PC-9 (cell line): ENCODE measurements at regions of chr6 and their contacts with region 1.

Region 1: DNA sequence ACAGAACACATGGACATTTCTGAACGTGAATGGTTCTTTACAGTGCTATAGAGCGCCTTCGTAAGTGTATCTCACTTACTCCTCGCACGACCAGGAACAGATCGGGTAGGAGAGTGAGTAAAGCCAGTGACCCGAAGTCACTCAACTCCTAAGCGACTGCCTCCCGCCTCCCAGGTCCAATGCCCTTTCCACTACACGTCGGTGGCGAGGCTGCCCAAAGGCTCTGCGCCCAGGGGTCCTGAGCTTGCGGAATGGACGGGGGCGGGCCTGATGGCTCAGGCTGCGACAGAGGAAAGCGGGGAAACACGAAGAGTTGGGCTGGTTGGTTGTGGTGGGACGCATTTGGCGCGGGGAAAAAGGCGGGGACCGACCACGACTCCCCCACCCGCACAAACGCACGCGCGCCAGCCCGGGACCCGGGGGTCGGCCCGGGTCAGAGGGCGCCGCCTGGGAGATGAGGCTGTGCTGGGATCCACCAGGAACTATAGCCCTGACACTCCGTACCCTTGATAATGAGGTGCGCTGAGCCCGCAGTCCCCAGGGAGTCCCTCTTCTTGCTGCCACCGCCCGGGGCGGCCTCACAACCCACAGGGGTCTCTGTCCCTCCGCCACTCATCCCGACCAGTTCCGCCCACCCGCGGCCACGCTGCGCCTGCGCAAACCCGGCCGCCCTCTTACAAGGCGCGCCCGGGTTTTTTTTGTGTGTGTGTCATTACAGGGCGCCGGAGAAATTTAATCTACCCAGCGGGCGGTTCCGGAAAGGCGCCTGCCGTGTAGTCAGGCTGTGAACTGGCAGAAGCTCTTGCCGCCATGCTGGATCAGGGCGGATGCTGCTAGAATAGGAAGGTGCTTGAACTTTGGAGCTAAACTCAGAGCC is at the start of gene BLOC1S5:
- DNase-seq: peak; percentile 84 to 95
- H3K4me3 ChIP-seq: peak within 1 kb of the TSS; percentile 83
- H3K27ac ChIP-seq: peak within 1 kb of the TSS; percentile 36
- H3K4me1 ChIP-seq: 0 out of 2 replicates have a peak, but pooled peaks cover 4% of the 10 kb centered on the region
- H3K27me3 ChIP-seq: no peaks in the 10 kb centered on the region
- CTCF ChIP-seq: no peak
- total RNA-seq, gene BLOC1S5: 12.5 and 16.1 TPM in 2 replicates

Region 2: DNA sequence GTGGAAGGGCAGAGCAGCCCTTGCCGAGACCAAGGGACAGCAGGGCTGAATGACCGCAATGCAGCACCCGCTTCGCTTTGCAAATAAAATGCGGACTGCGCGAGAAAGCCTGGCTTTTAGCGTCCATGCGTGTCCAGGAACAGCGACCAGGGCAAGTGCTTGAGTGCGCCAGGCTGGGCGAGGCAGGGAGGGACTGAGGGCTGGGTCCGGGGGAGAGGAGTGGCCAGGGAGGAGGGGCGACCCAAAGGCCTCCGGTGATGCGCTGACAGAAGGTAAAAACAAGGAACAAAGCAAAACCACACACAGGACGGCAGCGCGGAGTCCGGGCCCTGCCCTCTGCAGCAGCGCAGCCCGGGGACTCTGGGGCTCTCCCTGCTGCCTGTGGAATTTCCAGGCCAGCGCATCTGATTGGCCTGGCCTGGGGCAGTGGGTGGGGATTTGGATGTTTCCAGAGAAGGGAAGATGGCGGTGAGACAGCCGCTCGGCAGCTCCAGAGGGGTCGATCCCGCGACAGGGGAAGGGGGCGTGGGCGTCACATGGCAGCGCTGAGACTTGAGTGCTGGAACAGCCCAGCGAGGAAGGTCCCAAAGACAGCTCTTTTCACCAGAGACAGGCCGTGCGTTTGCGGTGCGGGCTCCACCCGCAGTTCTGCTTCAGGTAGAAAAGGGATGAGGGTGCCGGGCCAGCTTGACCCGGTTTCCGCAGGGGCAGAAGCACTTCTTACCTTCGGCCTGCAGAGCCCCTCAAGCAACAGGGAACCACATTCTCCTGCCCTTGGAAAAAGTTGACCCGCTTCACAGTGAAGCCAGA is 802.8 kb before region 1 on chr6:
- CTCF ChIA-PET with region 1: no interaction called
- POLR2A ChIA-PET with region 1: no interaction called
- intact Hi-C with region 1: loop called (anchors 10 kb)
- DNase-seq: peak; percentile 74 to 92
- H3K4me3 ChIP-seq: peak overlapping the region; percentile 62; the same call in 1 of the 2 replicates
- H3K27ac ChIP-seq: no peak overlapping the region; the same call in 1 of the 2 replicates
- H3K4me1 ChIP-seq: peaks cover 7% of the 10 kb centered on the region
- H3K27me3 ChIP-seq: no peaks in the 10 kb centered on the region
- CTCF ChIP-seq: no peak

Region 3: DNA sequence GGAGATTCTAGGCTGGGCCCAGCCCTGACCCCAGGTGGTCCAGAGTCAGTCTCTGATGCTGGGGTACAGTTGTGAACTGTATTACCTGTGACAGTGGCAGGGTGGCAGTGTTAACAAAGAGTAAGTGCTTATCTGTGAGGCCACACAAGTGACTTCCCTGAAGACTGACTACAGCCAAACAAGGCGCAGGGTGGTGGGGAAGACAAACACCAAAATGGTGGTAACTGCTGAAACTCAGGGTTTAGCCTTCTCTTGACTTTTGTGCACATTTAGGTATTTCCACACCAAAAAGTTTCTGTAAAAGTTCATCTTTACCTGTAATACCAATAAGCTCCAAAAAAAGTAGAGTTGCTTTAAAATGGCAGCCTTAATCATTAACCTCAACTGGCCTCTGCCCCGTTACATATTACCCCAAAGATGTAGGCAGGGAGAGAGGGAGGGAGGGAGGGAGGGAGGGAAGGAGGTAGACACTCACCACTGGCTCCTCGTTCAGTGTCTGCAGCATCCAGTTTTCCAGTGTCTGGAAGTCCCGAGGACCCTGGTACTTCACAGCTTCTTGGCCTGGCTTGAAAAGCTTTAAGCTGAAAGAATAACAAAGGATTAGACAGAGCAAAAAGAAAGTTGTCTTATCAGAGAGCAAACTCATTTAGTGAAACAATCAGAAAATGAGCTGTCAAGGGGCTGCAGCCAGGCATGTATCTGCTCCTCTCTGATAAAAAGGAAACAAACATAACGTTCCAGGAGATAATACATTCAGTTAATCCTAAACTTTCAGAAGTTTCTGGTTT is 164.7 kb before region 1 on chr6:
- CTCF ChIA-PET with region 1: no interaction called
- POLR2A ChIA-PET with region 1: no interaction called
- intact Hi-C with region 1: loop called (anchors 5 kb)
- DNase-seq: no peak
- H3K4me3 ChIP-seq: no peak overlapping the region
- H3K27ac ChIP-seq: no peak overlapping the region
- H3K4me1 ChIP-seq: no peaks in the 10 kb centered on the region
- H3K27me3 ChIP-seq: no peaks in the 10 kb centered on the region
- CTCF ChIP-seq: 0 out of 2 replicates have a peak, but pooled peaks have one; percentile 25

Region 4: DNA sequence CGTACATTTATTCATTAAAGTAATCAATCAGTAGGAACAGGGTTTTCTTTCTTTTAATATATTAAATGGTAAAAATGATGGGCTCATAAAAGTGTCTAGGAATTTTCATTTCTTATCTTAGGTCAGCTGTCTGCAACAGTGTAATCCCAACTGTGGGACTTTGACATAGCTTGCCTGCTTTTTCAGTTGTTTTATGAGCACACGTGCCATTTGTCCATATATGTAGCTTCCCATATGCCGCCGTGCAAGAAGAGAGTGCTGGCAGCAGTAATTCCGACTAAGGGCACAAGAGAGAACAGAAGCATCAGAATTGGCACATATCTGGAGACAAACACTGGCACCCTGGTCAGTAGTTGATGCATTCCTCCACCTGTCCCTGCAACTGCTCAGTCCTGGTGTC is 59.2 kb after region 1 on chr6:
- CTCF ChIA-PET with region 1: no interaction called
- POLR2A ChIA-PET with region 1: no interaction called
- intact Hi-C with region 1: no loop called
- DNase-seq: no peak
- H3K4me3 ChIP-seq: no peak overlapping the region
- H3K27ac ChIP-seq: no peak overlapping the region
- H3K4me1 ChIP-seq: no peaks in the 10 kb centered on the region
- H3K27me3 ChIP-seq: no peaks in the 10 kb centered on the region
- CTCF ChIP-seq: no peak

Region 5: GRCh38 chr6:8180327-8181159 is 116.5 kb after region 1 on chr6:
- CTCF ChIA-PET with region 1: no interaction called
- POLR2A ChIA-PET with region 1: no interaction called
- intact Hi-C with region 1: no loop called
- DNase-seq: peak; percentile 42 to 54
- H3K4me3 ChIP-seq: no peak overlapping the region
- H3K27ac ChIP-seq: no peak overlapping the region
- H3K4me1 ChIP-seq: peaks cover 14% of the 10 kb centered on the region
- H3K27me3 ChIP-seq: no peaks in the 10 kb centered on the region
- CTCF ChIP-seq: no peak